Endothelial cell of umbilical vein (primary cell): ENCODE measurements at regions of chr1 and their contacts with region 1.

Region 1: GRCh38 chr1:41902125-41902524 is 16.6 kb downstream of the HIVEP3 start:
- DNase-seq: peak; percentile 83
- H3K4me3 ChIP-seq: peak overlapping the region in 1 of 3 experiments; percentile 76
- H3K27ac ChIP-seq: peak overlapping the region; percentile 97
- H3K4me1 ChIP-seq: peaks cover 57% of the 10 kb centered on the region
- H3K27me3 ChIP-seq: no peaks in the 10 kb centered on the region
- CTCF ChIP-seq: no peak
- POLR2A ChIP-seq: peak; percentile 49

Region 2: DNA sequence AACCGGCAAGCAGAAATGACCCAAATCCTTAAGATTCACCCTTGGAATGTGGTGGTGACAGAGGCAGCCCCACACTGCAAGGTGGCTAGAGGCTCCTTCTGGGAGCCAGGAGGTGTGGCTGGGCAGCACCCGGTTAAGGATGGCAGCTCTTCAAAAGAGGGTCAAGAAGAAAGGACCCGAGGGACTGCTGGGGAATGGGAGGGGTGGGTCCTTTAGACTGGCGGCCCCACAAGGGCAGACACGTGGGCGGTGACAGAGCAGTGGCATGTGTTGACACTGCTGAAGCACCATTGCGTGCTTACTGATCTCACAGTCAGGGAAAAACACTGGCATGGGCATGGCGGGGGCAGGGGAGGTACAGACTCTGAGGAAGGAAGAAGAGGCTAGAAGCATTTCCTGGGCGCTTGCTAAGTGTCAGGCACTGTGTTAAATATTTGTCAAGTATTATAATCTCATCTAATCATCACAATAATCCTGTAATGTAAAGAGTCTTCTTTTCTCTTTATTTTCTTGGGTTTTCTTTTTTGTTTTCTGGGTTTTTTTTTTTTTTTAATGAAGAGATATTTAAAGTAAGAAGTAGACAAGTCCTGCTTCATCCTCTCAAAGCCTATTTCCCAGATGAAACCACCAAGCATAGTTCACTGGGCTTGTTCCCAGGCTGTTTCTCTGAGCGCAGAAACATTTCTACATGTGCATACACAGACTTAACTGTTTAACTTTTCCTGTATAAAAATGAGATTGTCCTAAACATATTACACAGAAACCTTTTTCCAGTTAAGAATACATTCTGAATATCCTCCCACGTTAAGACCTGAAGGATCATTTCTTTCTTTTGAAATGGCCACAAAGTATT is 251.9 kb before region 1 on chr1:
- CTCF ChIA-PET with region 1: no interaction called
- POLR2A ChIA-PET with region 1: no interaction called
- dilution Hi-C with region 1: no loop called
- intact Hi-C with region 1: loop called (anchors 10 kb)
- DNase-seq: no peak
- H3K4me3 ChIP-seq: no peak overlapping the region
- H3K27ac ChIP-seq: no peak overlapping the region
- H3K4me1 ChIP-seq: peaks cover 10% of the 10 kb centered on the region
- H3K27me3 ChIP-seq: no peaks in the 10 kb centered on the region
- CTCF ChIP-seq: no peak
- POLR2A ChIP-seq: no peak

Region 3: DNA sequence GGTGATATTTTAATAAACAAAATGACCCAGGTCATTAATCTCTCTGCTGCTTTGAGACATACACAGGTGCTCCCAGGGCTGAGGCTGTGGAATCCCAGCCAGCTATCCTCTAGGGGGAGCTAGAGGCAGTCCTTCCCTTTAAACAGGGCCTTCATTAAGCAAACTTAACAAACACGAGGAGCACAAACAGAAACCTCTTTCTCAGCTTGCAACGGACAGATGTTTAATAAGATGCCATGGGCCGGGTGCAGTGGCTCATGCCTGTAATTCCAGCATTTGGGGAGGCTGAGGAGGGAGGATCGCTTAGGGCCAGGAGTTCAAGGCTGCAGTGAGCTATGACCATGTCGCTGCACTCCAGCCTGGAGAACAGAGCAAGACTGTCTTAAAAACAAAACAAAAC is 90.1 kb before region 1 on chr1:
- CTCF ChIA-PET with region 1: interaction called, 7 read pairs
- POLR2A ChIA-PET with region 1: no interaction called
- dilution Hi-C with region 1: no loop called
- intact Hi-C with region 1: loop called (anchors 1 kb)
- DNase-seq: peak; percentile 72
- H3K4me3 ChIP-seq: no peak overlapping the region
- H3K27ac ChIP-seq: peak overlapping the region; percentile 95
- H3K4me1 ChIP-seq: peaks cover 17% of the 10 kb centered on the region
- H3K27me3 ChIP-seq: no peaks in the 10 kb centered on the region
- CTCF ChIP-seq: peak; percentile 75 to 82
- POLR2A ChIP-seq: no peak

Region 4: DNA sequence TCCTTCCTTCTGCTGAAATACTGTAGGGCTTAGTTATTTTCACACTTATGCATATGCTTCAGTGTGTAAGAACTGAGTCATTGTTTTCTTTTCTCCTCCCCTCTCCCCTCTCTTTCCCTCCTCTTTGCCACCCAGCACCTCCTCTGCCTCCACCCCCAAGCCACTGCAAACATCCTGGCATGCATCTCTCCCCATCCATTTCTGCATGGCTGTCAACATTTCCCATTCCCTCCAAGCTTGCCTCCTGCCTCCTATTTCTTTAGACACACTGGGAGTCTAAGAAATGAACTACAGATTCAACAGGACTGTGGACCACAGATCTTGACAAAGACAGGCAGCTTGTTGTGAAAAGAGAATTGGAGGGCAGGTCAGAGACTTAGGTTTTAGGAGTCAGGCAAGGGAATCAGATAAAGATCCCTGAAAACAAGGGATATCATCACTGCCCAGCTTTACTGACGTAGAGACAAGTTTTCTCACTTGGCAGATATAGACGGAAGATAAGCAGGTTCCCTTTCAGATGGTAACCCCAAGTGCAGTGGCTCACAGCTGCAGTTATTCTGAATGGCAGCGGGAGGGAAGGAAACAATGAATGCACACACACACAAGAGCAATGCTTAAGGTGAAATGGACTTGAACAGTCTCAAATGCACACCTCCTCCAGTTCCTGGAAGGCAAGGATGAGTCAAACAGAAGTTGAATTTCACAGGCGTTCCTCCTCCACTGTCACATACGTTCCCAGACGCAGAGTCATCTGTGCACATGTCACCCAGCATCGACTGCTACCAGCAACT is 39.5 kb before region 1 on chr1:
- CTCF ChIA-PET with region 1: no interaction called
- POLR2A ChIA-PET with region 1: no interaction called
- dilution Hi-C with region 1: no loop called
- intact Hi-C with region 1: loop called (anchors 2 kb)
- DNase-seq: peak; percentile 76
- H3K4me3 ChIP-seq: no peak overlapping the region
- H3K27ac ChIP-seq: peak overlapping the region; percentile 55
- H3K4me1 ChIP-seq: peaks cover 24% of the 10 kb centered on the region
- H3K27me3 ChIP-seq: no peaks in the 10 kb centered on the region
- CTCF ChIP-seq: no peak
- POLR2A ChIP-seq: no peak

Region 5: DNA sequence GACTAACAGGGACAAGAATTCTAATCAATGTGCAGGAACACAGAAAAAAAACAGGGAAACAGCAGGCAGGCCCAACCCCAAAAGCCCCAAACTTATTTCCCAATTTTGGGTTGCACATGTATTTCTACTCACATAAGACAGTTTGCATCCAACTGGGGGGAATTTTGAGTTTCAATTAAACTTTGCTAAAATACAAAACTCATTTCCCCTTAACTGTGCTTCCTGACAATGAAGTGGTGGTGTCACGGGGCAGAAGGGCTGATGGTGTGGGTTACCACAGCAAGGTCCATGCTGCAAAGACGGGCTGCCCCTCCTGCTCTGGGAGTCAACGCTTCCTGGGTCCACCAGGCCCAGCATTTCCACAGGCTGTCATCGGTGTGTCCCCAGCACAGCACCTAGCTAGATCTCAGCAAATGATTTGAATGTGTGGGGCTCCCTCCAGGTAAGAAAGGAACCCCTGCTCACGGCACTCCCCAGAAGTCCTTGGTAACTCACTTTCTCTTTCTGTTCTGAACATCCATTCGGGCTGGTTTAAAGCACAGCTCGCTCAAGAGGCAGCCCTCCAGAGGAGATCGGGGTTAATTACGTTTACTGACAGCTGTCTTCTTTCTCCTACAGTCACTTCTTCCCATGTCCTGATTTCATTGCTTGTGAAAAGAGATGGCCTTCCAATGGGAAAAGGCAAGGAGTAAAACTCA is 10.8 kb before region 1 on chr1:
- CTCF ChIA-PET with region 1: interaction called, 3 read pairs
- POLR2A ChIA-PET with region 1: no interaction called
- dilution Hi-C with region 1: no loop called
- intact Hi-C with region 1: loop called (anchors 1 kb)
- DNase-seq: peak; percentile 62
- H3K4me3 ChIP-seq: peak overlapping the region in 2 of 3 experiments; percentile 4 to 5
- H3K27ac ChIP-seq: peak overlapping the region; percentile 6
- H3K4me1 ChIP-seq: peaks cover 17% of the 10 kb centered on the region
- H3K27me3 ChIP-seq: no peaks in the 10 kb centered on the region
- CTCF ChIP-seq: peak; percentile 8 to 10
- POLR2A ChIP-seq: no peak

Region 6: GRCh38 chr1:41955461-41956159 is 53.5 kb after region 1 on chr1:
- CTCF ChIA-PET with region 1: no interaction called
- POLR2A ChIA-PET with region 1: no interaction called
- dilution Hi-C with region 1: no loop called
- intact Hi-C with region 1: loop called (anchors 1 kb)
- DNase-seq: peak; percentile 84
- H3K4me3 ChIP-seq: peak overlapping the region in 1 of 3 experiments; percentile 13
- H3K27ac ChIP-seq: peak overlapping the region; percentile 94
- H3K4me1 ChIP-seq: peaks cover 35% of the 10 kb centered on the region
- H3K27me3 ChIP-seq: no peaks in the 10 kb centered on the region
- CTCF ChIP-seq: no peak
- POLR2A ChIP-seq: no peak